Naive thymus-derived CD4-positive, alpha-beta T cell (primary cell): ENCODE measurements at regions of chr12 and their contacts with region 1.

Region 1: DNA sequence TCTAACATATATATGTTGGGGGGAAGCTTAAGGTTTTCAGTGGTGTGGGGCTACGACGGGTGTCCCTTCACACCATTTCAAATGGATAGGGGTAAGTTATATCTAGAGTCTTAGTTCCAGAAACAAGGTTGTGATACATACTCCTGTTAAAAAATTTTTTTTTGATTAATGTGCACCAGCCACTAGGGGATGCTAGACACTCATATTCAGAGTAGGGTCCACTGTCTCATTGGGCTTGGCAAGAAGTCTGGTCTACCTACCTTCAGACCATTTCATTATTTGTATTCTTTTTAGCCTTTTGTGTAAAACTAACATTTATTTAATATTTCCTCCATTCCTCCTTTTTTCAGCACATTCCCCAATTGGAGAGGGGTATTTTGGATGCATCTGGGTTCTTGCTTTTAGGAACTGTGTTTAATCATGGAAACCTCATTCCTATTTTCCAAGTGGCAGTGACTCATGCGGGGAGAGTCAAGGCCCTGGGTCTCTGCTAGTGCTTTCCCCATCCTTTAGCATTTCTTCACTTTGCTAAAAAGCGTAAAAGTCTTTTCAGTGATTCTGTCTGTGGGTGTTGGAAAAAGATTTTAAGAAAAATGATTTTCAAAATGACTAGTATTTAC is 33.4 kb downstream of the ANO4 start:
- DNase-seq: no peak
- ATAC-seq: no peak
- H3K4me3 ChIP-seq: no peak overlapping the region
- H3K4me3 Mint-ChIP-seq: no peak overlapping the region
- H3K27ac ChIP-seq: no peak overlapping the region
- H3K27ac Mint-ChIP-seq: no peak overlapping the region
- H3K4me1 ChIP-seq: no peaks in the 10 kb centered on the region
- H3K4me1 Mint-ChIP-seq: no peaks in the 10 kb centered on the region
- H3K27me3 ChIP-seq: no peaks in the 10 kb centered on the region
- H3K27me3 Mint-ChIP-seq: no peaks in the 10 kb centered on the region

Region 2: GRCh38 chr12:101323255-101323654 is 495.2 kb after region 1 on chr12:
- CTCF ChIA-PET with region 1: no interaction called
- POLR2A ChIA-PET with region 1: no interaction called
- intact Hi-C with region 1: loop called in 1 of 2 experiments (anchors 2 kb)
- DNase-seq: no peak
- ATAC-seq: no peak
- H3K4me3 ChIP-seq: no peak overlapping the region
- H3K4me3 Mint-ChIP-seq: no peak overlapping the region
- H3K27ac ChIP-seq: no peak overlapping the region
- H3K27ac Mint-ChIP-seq: no peak overlapping the region
- H3K4me1 ChIP-seq: no peaks in the 10 kb centered on the region
- H3K4me1 Mint-ChIP-seq: peaks cover 0 to 2% (median 0%) of the 10 kb centered on the region in 7 donors
- H3K27me3 ChIP-seq: no peaks in the 10 kb centered on the region
- H3K27me3 Mint-ChIP-seq: no peaks in the 10 kb centered on the region